ENCODE measurements at regions of chr1 and their contacts with region 1.

Region 1: GRCh38 chr1:64966158-64966971 is at the start of gene JAK1:
- DNase-seq: peak; percentile 72 to 83 (median 77)
- H3K4me3 ChIP-seq: peak within 1 kb of the TSS; percentile 86 to 97 (median 89)
- H3K4me3 Mint-ChIP-seq: peak within 1 kb of the TSS; percentile 96
- H3K27ac ChIP-seq: peak within 1 kb of the TSS; percentile 63 to 85
- H3K27ac Mint-ChIP-seq: peak within 1 kb of the TSS; percentile 81 to 95 (median 94)
- H3K4me1 ChIP-seq: peaks cover 31 to 39% of the 10 kb centered on the region in 2 donors
- H3K4me1 Mint-ChIP-seq: peaks cover 55% of the 10 kb centered on the region
- H3K27me3 ChIP-seq: no peaks in the 10 kb centered on the region
- H3K27me3 Mint-ChIP-seq: peaks cover 7 to 14% (median 8%) of the 10 kb centered on the region in 3 donors
- CTCF ChIP-seq: no peak
- polyA plus RNA-seq, gene JAK1: 43.1 to 76.2 (median 72.6) TPM

Region 2: GRCh38 chr1:64864018-64864940 is 102.1 kb before region 1 on chr1:
- intact Hi-C with region 1: loop called in 1 of 2 experiments (anchors 10 kb)
- DNase-seq: peak; percentile 95 to 99 (median 99)
- H3K4me3 ChIP-seq: peak overlapping the region in 2 of 3 experiments; percentile 19 to 44
- H3K4me3 Mint-ChIP-seq: peak overlapping the region; percentile 52 to 84
- H3K27ac ChIP-seq: peak overlapping the region; percentile 70 to 89
- H3K27ac Mint-ChIP-seq: peak overlapping the region; percentile 91 to 96 (median 94)
- H3K4me1 ChIP-seq: peaks cover 25 to 32% of the 10 kb centered on the region in 2 donors
- H3K4me1 Mint-ChIP-seq: peaks cover 37% of the 10 kb centered on the region
- H3K27me3 ChIP-seq: no peaks in the 10 kb centered on the region
- H3K27me3 Mint-ChIP-seq: peaks cover 0 to 2% (median 0%) of the 10 kb centered on the region in 3 donors
- CTCF ChIP-seq: no peak

Region 3: DNA sequence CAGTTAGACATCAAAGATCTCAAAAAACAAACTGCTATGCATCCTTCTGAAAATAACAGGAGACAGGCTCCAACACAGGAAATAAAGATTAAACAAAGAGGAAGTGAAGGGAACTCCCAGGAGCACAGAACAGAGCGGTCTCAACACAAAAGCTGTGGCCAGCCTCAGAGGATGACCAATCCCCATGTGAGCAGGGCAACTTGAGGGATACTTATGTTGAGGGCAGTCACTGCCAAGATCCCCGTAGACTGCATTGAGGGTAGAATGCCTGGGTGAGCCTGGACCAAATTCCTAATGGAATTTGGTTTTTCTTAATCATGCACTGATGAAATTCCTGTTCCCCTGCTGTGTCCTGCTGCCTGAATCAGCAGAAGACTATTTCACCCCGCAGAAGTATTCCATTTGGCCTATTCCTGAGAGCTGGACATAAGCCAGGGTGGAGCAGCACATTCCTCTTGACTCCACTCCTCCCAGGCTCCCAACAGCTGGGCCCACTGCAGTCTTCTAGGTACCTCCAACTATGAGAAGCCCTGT is 49.0 kb before region 1 on chr1:
- intact Hi-C with region 1: loop called in 1 of 2 experiments (anchors 10 kb)
- DNase-seq: peak; percentile 80 to 96 (median 86)
- H3K4me3 ChIP-seq: no peak overlapping the region
- H3K4me3 Mint-ChIP-seq: no peak overlapping the region
- H3K27ac ChIP-seq: peak overlapping the region in 1 of 2 donors; percentile 57
- H3K27ac Mint-ChIP-seq: peak overlapping the region in 6 of 7 donors; percentile 58 to 86 (median 65)
- H3K4me1 ChIP-seq: peaks cover 21 to 27% of the 10 kb centered on the region in 2 donors
- H3K4me1 Mint-ChIP-seq: peaks cover 49% of the 10 kb centered on the region
- H3K27me3 ChIP-seq: no peaks in the 10 kb centered on the region
- H3K27me3 Mint-ChIP-seq: peaks cover 0 to 2% (median 0%) of the 10 kb centered on the region in 3 donors
- CTCF ChIP-seq: no peak

Region 4: GRCh38 chr1:64933296-64934070 is 32.9 kb before region 1 on chr1:
- intact Hi-C with region 1: loop called (anchors 5 kb)
- DNase-seq: peak; percentile 89 to 97 (median 94)
- H3K4me3 ChIP-seq: peak overlapping the region in 2 of 3 experiments; percentile 8 to 48
- H3K4me3 Mint-ChIP-seq: peak overlapping the region; percentile 61 to 79
- H3K27ac ChIP-seq: peak overlapping the region; percentile 70 to 92
- H3K27ac Mint-ChIP-seq: peak overlapping the region; percentile 95 to 99 (median 98)
- H3K4me1 ChIP-seq: peaks cover 37 to 42% of the 10 kb centered on the region in 2 donors
- H3K4me1 Mint-ChIP-seq: peaks cover 54% of the 10 kb centered on the region
- H3K27me3 ChIP-seq: no peaks in the 10 kb centered on the region
- H3K27me3 Mint-ChIP-seq: peaks cover 0 to 3% (median 2%) of the 10 kb centered on the region in 3 donors
- CTCF ChIP-seq: no peak

Region 5: GRCh38 chr1:65002508-65003315 is 36.3 kb after region 1 on chr1:
- intact Hi-C with region 1: loop called (anchors 5 kb)
- DNase-seq: peak; percentile 88 to 96 (median 95)
- H3K4me3 ChIP-seq: peak overlapping the region; percentile 49 to 75 (median 53)
- H3K4me3 Mint-ChIP-seq: peak overlapping the region; percentile 81 to 94
- H3K27ac ChIP-seq: peak overlapping the region; percentile 70 to 74
- H3K27ac Mint-ChIP-seq: peak overlapping the region; percentile 87 to 94 (median 92)
- H3K4me1 ChIP-seq: peaks cover 24 to 26% of the 10 kb centered on the region in 2 donors
- H3K4me1 Mint-ChIP-seq: peaks cover 27% of the 10 kb centered on the region
- H3K27me3 ChIP-seq: peaks cover 0 to 7% of the 10 kb centered on the region in 2 donors
- H3K27me3 Mint-ChIP-seq: peaks cover 4 to 22% (median 16%) of the 10 kb centered on the region in 3 donors
- CTCF ChIP-seq: no peak

Measured in CD14-positive monocyte (primary cell).